IMR-90 (cell line): ENCODE measurements at regions of chr9 and their contacts with region 1.

Region 1: GRCh38 chr9:37144762-37145161 is 24.4 kb downstream of the ZCCHC7 start:
- DNase-seq: peak; percentile 38
- ATAC-seq: peak; percentile 67
- H3K4me3 ChIP-seq: no peak overlapping the region
- H3K27ac ChIP-seq: no peak overlapping the region
- H3K4me1 ChIP-seq: no peaks in the 10 kb centered on the region
- H3K27me3 ChIP-seq: no peaks in the 10 kb centered on the region
- CTCF ChIP-seq: no peak
- POLR2A ChIP-seq: no peak
- RAD21 ChIP-seq: no peak

Region 2: GRCh38 chr9:36980148-36980974 is 164.4 kb before region 1 on chr9:
- CTCF ChIA-PET with region 1: no interaction called
- POLR2A ChIA-PET with region 1: no interaction called
- dilution Hi-C with region 1: no loop called
- in situ Hi-C with region 1: no loop called
- intact Hi-C with region 1: no loop called
- DNase-seq: no peak
- ATAC-seq: no peak
- H3K4me3 ChIP-seq: no peak overlapping the region
- H3K27ac ChIP-seq: no peak overlapping the region
- H3K4me1 ChIP-seq: no peaks in the 10 kb centered on the region
- H3K27me3 ChIP-seq: peaks cover 44% of the 10 kb centered on the region
- CTCF ChIP-seq: no peak
- POLR2A ChIP-seq: no peak
- RAD21 ChIP-seq: no peak

Region 3: GRCh38 chr9:37262410-37262809 is 117.6 kb after region 1 on chr9:
- CTCF ChIA-PET with region 1: no interaction called
- POLR2A ChIA-PET with region 1: no interaction called
- dilution Hi-C with region 1: no loop called
- in situ Hi-C with region 1: no loop called
- intact Hi-C with region 1: loop called (anchors 5 kb)
- DNase-seq: peak; percentile 49
- ATAC-seq: 0 out of 2 replicates have a peak, but pooled peaks have one; percentile 44
- H3K4me3 ChIP-seq: no peak overlapping the region
- H3K27ac ChIP-seq: no peak overlapping the region
- H3K4me1 ChIP-seq: no peaks in the 10 kb centered on the region
- H3K27me3 ChIP-seq: no peaks in the 10 kb centered on the region
- CTCF ChIP-seq: peak; percentile 57
- POLR2A ChIP-seq: no peak
- RAD21 ChIP-seq: peak; percentile 75